BJ (cell line): ENCODE measurements at regions of chr15 and their contacts with region 1.

Region 1: GRCh38 chr15:64911311-64912191 is at the start of gene ANKDD1A:
- DNase-seq: no peak
- H3K4me3 ChIP-seq: peak within 1 kb of the TSS; percentile 69
- H3K27me3 ChIP-seq: no peaks in the 10 kb centered on the region
- CTCF ChIP-seq: no peak
- polyA plus RNA-seq, gene ANKDD1A: 2.9 and 4.9 TPM in 2 replicates

Region 2: DNA sequence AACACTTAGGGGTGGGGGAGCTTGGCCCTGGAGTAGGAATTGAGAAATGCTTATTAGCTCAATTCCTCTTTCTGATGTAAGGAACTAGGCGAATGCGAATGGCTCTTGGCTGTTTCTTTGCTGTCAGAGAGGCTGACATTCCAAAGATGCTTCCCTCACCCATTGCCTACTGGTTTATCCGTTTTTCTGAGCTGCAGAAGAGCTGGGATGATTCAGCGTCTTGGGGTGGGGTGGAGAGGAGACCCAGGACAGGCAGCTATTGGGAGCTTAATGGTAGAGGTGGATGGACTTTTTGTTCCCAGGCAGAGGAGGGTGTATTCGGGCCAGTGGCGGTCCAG is 60.1 kb before region 1 on chr15:
- CTCF ChIA-PET with region 1: no interaction called
- POLR2A ChIA-PET with region 1: no interaction called
- DNase-seq: peak; percentile 83
- H3K4me3 ChIP-seq: no peak overlapping the region
- H3K27me3 ChIP-seq: no peaks in the 10 kb centered on the region
- CTCF ChIP-seq: no peak

Region 3: GRCh38 chr15:64888336-64888735 is 23.2 kb before region 1 on chr15:
- CTCF ChIA-PET with region 1: interaction called, 5 read pairs
- POLR2A ChIA-PET with region 1: interaction called, 10 read pairs
- DNase-seq: no peak
- H3K4me3 ChIP-seq: no peak overlapping the region
- H3K27me3 ChIP-seq: no peaks in the 10 kb centered on the region
- CTCF ChIP-seq: no peak

Region 4: DNA sequence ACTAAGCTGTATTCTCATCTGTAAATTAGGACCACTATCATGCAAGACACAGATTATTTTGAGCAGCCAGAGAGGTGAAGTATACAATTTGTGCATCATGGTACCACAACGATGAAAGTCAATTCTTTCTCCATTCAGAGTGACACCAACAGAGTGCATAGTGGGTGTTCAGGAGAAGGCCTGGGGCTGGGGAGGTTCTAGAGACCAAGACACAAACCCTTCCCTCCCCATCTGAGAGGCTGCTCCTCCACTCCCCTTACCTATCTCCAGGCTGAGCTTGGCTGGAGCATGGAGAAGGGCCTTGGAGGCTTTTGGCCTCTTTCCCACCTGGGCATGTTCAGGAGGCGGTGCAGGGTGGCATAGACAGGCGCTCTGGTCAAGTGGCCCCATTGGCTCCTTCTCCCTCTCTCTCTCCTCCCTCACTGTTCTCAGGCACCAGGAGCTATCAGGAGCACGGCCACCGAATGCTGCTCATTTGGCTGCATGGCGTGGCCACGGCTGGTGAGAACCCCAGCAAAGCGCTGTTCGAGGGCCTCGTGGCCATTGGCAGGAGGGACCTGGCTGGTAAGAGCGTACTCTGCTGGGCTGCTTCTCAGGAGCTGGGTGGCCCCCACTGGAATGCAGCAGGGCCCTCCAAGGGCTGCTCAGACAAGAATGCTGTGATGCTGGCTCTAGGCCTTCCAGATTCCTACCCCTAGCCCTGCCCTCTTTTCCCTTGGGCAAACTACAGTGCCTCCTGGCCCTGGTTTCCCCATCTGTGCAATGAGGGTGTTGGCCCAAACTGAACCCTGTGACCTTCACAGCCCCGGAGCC is 38.1 kb after region 1 on chr15:
- CTCF ChIA-PET with region 1: no interaction called
- POLR2A ChIA-PET with region 1: no interaction called
- DNase-seq: no peak
- H3K4me3 ChIP-seq: no peak overlapping the region
- H3K27me3 ChIP-seq: no peaks in the 10 kb centered on the region
- CTCF ChIP-seq: no peak

Region 5: DNA sequence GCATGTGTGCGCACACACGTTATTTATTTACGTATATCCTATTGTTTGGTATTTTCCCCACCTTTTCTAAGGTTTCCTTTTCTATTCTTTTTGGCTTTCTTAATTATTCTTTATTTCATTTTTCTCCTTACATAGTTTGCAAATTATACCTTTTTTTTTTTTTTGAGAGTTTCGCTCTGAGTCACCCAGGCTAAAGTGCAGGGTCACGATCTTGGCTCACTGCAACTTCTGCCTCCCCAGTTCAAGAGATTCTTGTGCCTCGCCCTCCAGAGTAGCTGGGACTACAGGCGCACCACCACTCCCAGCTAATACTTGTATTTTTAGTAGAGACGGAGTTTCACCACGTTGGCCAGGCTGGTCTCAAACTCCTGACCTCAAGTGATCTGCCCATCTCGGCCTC is 319.8 kb after region 1 on chr15:
- CTCF ChIA-PET with region 1: no interaction called
- POLR2A ChIA-PET with region 1: no interaction called
- DNase-seq: no peak
- H3K4me3 ChIP-seq: no peak overlapping the region
- H3K27me3 ChIP-seq: no peaks in the 10 kb centered on the region
- CTCF ChIP-seq: no peak